HepG2 (cell line): ENCODE measurements at regions of chr4 and their contacts with region 1.

Region 1: GRCh38 chr4:108018040-108018883 is 28.6 kb downstream of the HADH start:
- DNase-seq: peak; percentile 58
- ATAC-seq: peak; percentile 92
- H3K4me3 ChIP-seq: no peak overlapping the region
- H3K27ac ChIP-seq: no peak overlapping the region
- H3K4me1 ChIP-seq: no peaks in the 10 kb centered on the region
- H3K27me3 ChIP-seq: no peaks in the 10 kb centered on the region; a peak in 1 of 5 replicates
- CTCF ChIP-seq: peak; percentile 83
- EP300 ChIP-seq: no peak
- POLR2A ChIP-seq: no peak
- RAD21 ChIP-seq: 0 out of 2 replicates have a peak, but pooled peaks have one; percentile 22

Region 2: GRCh38 chr4:106762666-106763443 is 1255.4 kb before region 1 on chr4:
- CTCF ChIA-PET with region 1: no interaction called
- POLR2A ChIA-PET with region 1: no interaction called
- in situ Hi-C with region 1: no loop called
- intact Hi-C with region 1: no loop called
- DNase-seq: no peak
- ATAC-seq: no peak
- H3K4me3 ChIP-seq: no peak overlapping the region
- H3K27ac ChIP-seq: no peak overlapping the region
- H3K4me1 ChIP-seq: no peaks in the 10 kb centered on the region
- H3K27me3 ChIP-seq: no peaks in the 10 kb centered on the region
- CTCF ChIP-seq: no peak
- EP300 ChIP-seq: no peak
- POLR2A ChIP-seq: no peak
- RAD21 ChIP-seq: no peak

Region 3: GRCh38 chr4:107654694-107655093 is 363.6 kb before region 1 on chr4:
- CTCF ChIA-PET with region 1: no interaction called
- POLR2A ChIA-PET with region 1: no interaction called
- in situ Hi-C with region 1: no loop called
- intact Hi-C with region 1: no loop called
- DNase-seq: peak; percentile 6
- ATAC-seq: peak; percentile 45; the same call in 2 of the 3 replicates
- H3K4me3 ChIP-seq: no peak overlapping the region
- H3K27ac ChIP-seq: no peak overlapping the region
- H3K4me1 ChIP-seq: no peaks in the 10 kb centered on the region
- H3K27me3 ChIP-seq: no peaks in the 10 kb centered on the region
- CTCF ChIP-seq: 0 out of 2 replicates have a peak, but pooled peaks have one; percentile 7
- EP300 ChIP-seq: no peak
- POLR2A ChIP-seq: no peak
- RAD21 ChIP-seq: no peak

Region 4: DNA sequence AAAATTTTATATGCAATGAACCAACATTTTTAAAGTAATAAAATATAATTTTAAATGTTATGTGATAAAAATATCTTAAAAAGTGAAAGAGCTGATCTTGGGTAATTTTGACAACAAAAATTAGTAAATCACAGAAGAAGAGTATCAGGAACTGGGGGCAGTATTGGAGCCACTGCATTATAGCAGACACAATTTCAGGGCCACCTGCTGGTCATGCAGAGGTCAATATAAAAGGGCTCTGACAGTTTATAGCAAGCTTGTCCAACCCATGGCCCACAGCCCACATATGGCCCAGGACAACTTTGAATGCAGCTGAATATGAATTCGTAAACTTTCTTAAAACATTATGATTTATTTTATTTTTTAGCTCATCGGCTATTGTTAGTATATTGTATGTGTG is 163.4 kb after region 1 on chr4:
- CTCF ChIA-PET with region 1: no interaction called
- POLR2A ChIA-PET with region 1: no interaction called
- in situ Hi-C with region 1: no loop called
- intact Hi-C with region 1: loop called (anchors 5 kb)
- DNase-seq: peak; percentile 16
- ATAC-seq: peak; percentile 91
- H3K4me3 ChIP-seq: no peak overlapping the region
- H3K27ac ChIP-seq: no peak overlapping the region
- H3K4me1 ChIP-seq: no peaks in the 10 kb centered on the region
- H3K27me3 ChIP-seq: no peaks in the 10 kb centered on the region
- CTCF ChIP-seq: peak; percentile 32; the same call in 1 of the 2 replicates
- EP300 ChIP-seq: no peak
- POLR2A ChIP-seq: no peak
- RAD21 ChIP-seq: no peak

Region 5: DNA sequence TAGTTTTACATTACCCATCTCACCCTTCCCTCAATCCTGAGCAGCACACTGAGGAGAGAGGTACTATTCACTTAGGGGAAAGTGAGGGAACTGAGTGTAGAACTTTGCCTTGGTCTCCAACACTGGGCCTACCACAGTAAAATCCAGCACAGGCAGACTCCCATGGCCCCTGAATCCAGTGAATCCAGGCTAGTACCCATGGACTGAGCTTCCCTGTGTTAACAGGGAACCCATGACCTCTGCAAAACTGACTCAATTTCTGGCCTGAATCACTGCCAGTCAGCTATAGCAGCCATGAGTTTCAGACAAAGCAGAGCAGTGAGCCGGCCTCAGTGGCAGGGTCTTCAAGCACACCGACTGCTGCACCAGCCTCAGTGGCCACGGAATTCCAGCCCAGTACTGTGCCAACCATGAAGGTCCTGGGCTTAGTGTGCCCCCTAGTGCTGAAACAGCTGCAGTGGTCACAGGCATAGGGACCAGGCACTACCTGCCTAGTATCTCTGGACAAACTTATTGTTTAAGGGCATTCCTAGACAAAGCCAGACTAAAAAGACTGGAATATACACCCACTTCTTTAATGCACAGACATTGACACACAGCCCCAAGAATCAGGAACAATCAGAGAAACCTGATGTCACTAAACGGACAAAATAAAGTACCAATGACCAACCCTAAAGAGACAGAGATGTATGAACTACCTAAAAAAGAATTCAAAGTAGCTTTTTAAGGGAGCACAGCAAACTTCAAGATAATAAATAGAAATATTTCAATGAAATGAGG is 474.7 kb after region 1 on chr4:
- CTCF ChIA-PET with region 1: interaction called, 4 read pairs
- POLR2A ChIA-PET with region 1: no interaction called
- in situ Hi-C with region 1: no loop called
- intact Hi-C with region 1: loop called (anchors 2 kb)
- DNase-seq: peak; percentile 16
- ATAC-seq: peak; percentile 93
- H3K4me3 ChIP-seq: no peak overlapping the region
- H3K27ac ChIP-seq: no peak overlapping the region
- H3K4me1 ChIP-seq: no peaks in the 10 kb centered on the region
- H3K27me3 ChIP-seq: no peaks in the 10 kb centered on the region
- CTCF ChIP-seq: peak; percentile 76
- EP300 ChIP-seq: no peak
- POLR2A ChIP-seq: no peak
- RAD21 ChIP-seq: peak; percentile 46; the same call in 1 of the 2 replicates

Region 6: DNA sequence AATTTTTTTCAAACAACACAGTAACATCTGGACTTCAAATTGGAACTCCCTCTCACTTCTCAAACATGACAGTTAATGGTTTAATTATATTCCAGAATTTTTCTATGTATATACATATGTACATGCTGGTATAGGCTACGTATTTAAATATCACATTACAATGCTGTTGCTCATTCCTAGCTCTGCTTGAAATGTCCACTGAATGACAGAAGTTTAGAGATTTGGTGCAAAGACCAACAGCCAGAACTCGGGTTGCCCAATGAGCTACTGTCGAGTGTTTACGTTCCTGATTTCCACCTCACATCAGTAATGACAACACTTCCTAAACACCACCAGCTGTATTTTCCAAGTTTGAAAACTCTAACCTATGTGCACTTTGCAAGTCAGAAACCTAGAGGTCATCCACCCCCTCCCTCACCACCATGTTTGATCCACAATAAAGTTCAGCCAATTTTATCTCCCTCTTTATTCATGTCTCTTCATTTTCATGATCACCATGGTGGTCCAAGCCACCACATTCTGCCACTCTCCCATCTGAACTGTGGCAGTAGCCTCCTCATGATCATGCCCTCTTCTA is 552.8 kb after region 1 on chr4:
- CTCF ChIA-PET with region 1: interaction called, 14 read pairs
- POLR2A ChIA-PET with region 1: no interaction called
- in situ Hi-C with region 1: loop called (anchors 5 kb)
- intact Hi-C with region 1: loop called (anchors 1 kb)
- DNase-seq: no peak
- ATAC-seq: peak; percentile 54; the same call in 2 of the 3 replicates
- H3K4me3 ChIP-seq: no peak overlapping the region
- H3K27ac ChIP-seq: no peak overlapping the region
- H3K4me1 ChIP-seq: no peaks in the 10 kb centered on the region
- H3K27me3 ChIP-seq: no peaks in the 10 kb centered on the region
- CTCF ChIP-seq: no peak
- EP300 ChIP-seq: no peak
- POLR2A ChIP-seq: no peak
- RAD21 ChIP-seq: no peak